Tibial artery (tissue), 4 donors: ENCODE measurements at regions of chr21 and their contacts with region 1.

Region 1: GRCh38 chr21:15064576-15065391 is at the start of gene NRIP1:
- DNase-seq: peak; percentile 86 to 94
- H3K4me3 ChIP-seq: peak within 1 kb of the TSS; percentile 69 to 85
- H3K27ac ChIP-seq: peak within 1 kb of the TSS; percentile 98
- H3K4me1 ChIP-seq: peaks cover 0 to 37% (median 17%) of the 10 kb centered on the region in 4 donors
- H3K27me3 ChIP-seq: no peaks in the 10 kb centered on the region
- CTCF ChIP-seq: peak in 1 of 2 experiments; percentile 8

Region 2: DNA sequence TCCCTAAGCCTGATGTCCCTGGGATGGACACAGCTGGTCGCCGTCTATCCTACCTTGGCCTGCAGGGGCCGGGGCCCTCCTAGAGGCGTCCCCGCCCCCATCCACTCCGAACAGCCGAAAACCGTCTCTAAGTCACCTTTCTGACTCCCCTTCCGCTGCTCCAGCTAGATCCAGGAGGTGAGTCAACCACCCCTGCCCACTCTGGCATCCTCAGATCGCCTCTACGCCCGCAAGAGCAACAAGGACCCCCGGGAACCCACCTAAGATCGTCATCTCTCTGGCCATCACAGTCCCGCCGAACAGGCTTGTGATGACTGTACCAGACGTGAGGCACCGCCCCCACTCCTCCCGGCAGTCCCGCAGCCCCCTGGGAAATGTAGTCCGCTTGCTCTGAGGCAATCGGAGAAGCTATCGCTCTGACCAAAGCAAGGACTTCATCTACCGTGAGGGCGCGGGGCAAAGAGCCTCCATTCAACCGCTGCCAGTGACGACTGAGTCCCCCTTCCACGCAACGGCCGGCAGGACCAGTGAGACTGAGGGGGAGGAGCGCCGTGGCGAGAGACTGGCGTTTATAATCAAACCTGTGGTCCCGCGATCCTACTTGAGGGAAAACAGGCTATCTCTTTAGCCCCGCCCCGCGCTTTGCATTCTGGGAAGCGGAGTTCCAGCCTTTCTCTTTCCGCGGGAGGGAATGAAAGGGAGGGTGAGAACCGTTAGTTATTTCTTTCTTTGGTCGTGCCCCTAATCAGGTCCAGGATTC is 681.8 kb before region 1 on chr21 and contains the start of gene HSPA13:
- intact Hi-C with region 1: loop called (anchors 10 kb)
- DNase-seq: peak; percentile 100
- H3K4me3 ChIP-seq: peak within 1 kb of the TSS; percentile 67 to 81
- H3K27ac ChIP-seq: peak within 1 kb of the TSS; percentile 90 to 92
- H3K4me1 ChIP-seq: peaks cover 0 to 28% (median 21%) of the 10 kb centered on the region in 4 donors
- H3K27me3 ChIP-seq: no peaks in the 10 kb centered on the region
- CTCF ChIP-seq: no peak

Region 3: GRCh38 chr21:15159382-15160020 is 94.7 kb after region 1 on chr21:
- intact Hi-C with region 1: loop called (anchors 10 kb)
- DNase-seq: no peak
- H3K4me3 ChIP-seq: no peak overlapping the region
- H3K27ac ChIP-seq: no peak overlapping the region
- H3K4me1 ChIP-seq: no peaks in the 10 kb centered on the region
- H3K27me3 ChIP-seq: no peaks in the 10 kb centered on the region
- CTCF ChIP-seq: no peak